ENCODE measurements at regions of chr2 and their contacts with region 1.

Region 1: DNA sequence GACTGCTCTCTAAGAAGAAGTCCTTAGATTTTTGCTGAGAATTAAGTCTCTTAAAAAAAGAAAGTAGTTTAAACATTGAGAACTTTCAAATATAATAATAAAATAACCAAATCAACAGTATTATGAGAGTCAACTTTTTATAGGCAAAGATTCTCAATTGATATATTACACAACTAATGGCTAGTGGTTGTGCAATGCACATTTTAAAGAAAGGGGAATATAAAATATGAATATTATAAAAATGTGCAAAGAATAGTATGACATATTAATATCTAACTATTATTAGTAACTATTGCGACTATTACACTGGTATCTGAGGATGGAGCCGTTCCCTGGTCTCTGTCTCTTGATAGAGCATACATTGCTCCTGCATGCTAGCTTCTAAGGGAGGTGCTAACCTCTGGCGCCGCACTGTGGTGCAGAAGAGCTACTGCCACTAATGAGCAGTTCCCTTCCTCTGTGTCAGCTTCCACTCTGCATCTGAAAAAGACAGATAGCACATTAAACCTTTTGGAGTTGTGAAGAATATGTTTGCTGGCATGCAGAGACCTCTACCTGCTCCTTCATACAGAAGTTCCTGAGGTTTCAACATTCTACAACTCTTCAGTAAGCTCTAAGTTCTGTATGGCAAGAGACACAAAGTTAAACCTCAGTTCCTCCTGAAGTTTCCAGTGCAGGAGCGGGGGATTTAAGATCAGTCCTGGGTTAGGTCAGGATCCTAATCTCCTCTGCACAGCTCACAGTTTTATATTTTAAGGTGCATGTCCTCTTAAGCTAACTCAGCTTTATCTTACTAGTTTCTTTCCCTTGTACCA is 3.5 kb upstream of the SLC9A2 start:
- DNase-seq: peak; percentile 68
- H3K4me3 ChIP-seq: no peak overlapping the region
- H3K27ac ChIP-seq: no peak overlapping the region
- H3K4me1 ChIP-seq: no peaks in the 10 kb centered on the region
- H3K27me3 ChIP-seq: peaks cover 62% of the 10 kb centered on the region
- CTCF ChIP-seq: peak; percentile 83

Region 2: DNA sequence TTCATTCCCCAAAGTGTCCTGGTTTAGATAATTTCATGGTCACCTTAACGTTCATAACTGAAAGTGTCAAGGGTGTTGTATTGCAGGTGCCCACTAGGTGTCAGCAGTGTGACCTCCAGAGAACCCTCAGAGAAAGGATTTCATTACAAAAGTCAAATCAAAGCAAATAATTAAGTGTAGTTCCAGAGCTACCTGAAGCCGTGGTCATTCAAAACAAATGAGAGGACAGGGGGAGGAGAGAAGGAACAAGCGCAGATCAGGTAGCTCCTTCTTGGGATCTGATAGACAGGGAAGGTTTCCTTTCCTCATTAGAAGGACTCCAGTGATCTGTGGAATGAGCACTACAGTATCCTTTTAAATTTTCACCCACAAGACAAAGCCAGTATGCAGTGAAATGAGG is 142.8 kb before region 1 on chr2 and contains the start of gene SLC9A4:
- CTCF ChIA-PET with region 1: interaction called, 9 read pairs
- POLR2A ChIA-PET with region 1: no interaction called
- intact Hi-C with region 1: loop called (anchors 2 kb)
- DNase-seq: peak; percentile 41
- H3K4me3 ChIP-seq: no peak within 1 kb of the TSS
- H3K27ac ChIP-seq: no peak within 1 kb of the TSS
- H3K4me1 ChIP-seq: no peaks in the 10 kb centered on the region
- H3K27me3 ChIP-seq: peaks cover 22% of the 10 kb centered on the region
- CTCF ChIP-seq: peak; percentile 83
- total RNA-seq, gene SLC9A4: 0.11 and 0.17 TPM in 2 replicates

Region 3: GRCh38 chr2:102520028-102520427 is 95.8 kb before region 1 on chr2:
- CTCF ChIA-PET with region 1: no interaction called
- POLR2A ChIA-PET with region 1: no interaction called
- intact Hi-C with region 1: loop called (anchors 5 kb)
- DNase-seq: peak; percentile 55
- H3K4me3 ChIP-seq: no peak overlapping the region
- H3K27ac ChIP-seq: no peak overlapping the region
- H3K4me1 ChIP-seq: no peaks in the 10 kb centered on the region
- H3K27me3 ChIP-seq: no peaks in the 10 kb centered on the region
- CTCF ChIP-seq: peak; percentile 73

Region 4: DNA sequence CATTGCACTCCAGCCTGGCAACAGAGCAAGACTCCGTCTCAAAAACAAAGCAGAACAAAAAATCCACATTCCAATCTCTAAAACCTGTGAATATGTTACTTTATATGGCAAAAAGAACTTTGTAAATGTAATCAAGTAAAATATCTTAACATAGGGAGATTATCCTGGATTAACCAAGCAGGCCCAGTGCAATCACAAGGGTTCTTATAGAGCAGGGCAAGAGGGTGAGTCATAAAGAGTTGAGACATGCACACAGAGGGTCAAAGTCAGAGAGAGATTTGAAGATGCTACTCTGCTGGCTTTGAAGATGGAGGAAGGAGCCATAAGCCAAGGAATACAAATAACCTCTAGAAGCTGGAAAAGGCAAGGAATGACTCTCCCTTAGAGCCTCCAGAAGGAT is 57.4 kb before region 1 on chr2:
- CTCF ChIA-PET with region 1: no interaction called
- POLR2A ChIA-PET with region 1: no interaction called
- intact Hi-C with region 1: no loop called
- DNase-seq: no peak
- H3K4me3 ChIP-seq: no peak overlapping the region
- H3K27ac ChIP-seq: no peak overlapping the region
- H3K4me1 ChIP-seq: no peaks in the 10 kb centered on the region
- H3K27me3 ChIP-seq: peaks cover 2% of the 10 kb centered on the region
- CTCF ChIP-seq: no peak